ENCODE measurements at regions of chr15 and their contacts with region 1.

Region 1: DNA sequence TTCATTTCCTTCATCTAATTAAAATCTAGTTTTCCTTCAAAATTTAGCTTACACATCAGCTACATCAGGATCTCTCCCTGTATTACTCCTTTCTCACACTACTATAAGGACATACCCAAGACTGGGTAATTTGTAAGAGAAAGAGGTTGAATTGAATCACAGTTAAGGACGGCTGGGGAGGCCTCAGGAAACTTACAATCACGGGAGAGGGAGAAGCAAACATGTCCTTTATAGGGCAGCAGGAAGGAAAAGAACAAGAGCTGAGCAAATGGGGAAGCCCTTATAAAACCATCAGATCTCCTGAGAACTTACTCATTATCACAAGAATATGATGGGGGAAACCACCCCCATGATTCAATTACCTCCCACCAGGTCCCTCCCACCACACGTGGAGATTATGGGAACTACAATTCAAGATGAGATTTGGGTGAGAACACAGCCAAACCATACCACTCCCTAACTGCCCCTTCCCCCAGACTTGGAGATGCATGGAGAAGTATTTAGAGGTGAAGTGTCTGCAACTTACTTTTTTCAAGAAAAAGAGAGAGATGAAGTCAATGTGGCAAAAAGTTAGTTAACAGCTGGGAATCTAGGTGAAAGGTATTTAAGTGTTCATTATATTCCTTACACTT is 21.3 kb downstream of the PRTG start:
- DNase-seq: no peak
- ATAC-seq: no peak
- H3K4me3 ChIP-seq: no peak overlapping the region
- H3K27ac ChIP-seq: no peak overlapping the region
- H3K4me1 ChIP-seq: no peaks in the 10 kb centered on the region
- H3K27me3 ChIP-seq: no peaks in the 10 kb centered on the region
- CTCF ChIP-seq: no peak
- EP300 ChIP-seq: no peak
- POLR2A ChIP-seq: no peak
- RAD21 ChIP-seq: no peak

Region 2: DNA sequence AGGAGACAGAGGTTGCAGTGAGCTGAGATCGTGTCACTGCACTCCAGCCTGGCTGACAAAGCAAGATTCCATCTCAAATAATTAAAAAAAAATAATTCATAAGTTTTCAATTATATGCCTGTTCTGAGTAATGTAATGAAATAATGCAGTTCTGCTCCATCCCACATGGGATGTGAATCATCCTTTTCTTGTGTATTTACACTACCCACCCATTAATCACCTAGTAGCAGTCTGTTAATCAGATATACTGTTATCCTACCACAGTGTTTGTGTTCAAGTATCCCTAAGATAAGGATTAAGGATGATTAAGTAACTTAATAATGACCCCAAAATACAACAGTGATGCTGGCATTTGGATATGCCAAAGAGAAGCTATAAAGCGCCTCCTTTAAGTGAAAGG is 363.9 kb before region 1 on chr15:
- CTCF ChIA-PET with region 1: no interaction called
- POLR2A ChIA-PET with region 1: no interaction called
- RAD21 ChIA-PET with region 1: no interaction called
- SMC1A ChIA-PET with region 1: no interaction called
- in situ Hi-C with region 1: no loop called
- intact Hi-C with region 1: no loop called
- DNase-seq: no peak
- ATAC-seq: no peak
- H3K4me3 ChIP-seq: no peak overlapping the region
- H3K27ac ChIP-seq: no peak overlapping the region
- H3K4me1 ChIP-seq: no peaks in the 10 kb centered on the region
- H3K27me3 ChIP-seq: no peaks in the 10 kb centered on the region
- CTCF ChIP-seq: no peak
- EP300 ChIP-seq: no peak
- POLR2A ChIP-seq: no peak
- RAD21 ChIP-seq: no peak

Region 3: DNA sequence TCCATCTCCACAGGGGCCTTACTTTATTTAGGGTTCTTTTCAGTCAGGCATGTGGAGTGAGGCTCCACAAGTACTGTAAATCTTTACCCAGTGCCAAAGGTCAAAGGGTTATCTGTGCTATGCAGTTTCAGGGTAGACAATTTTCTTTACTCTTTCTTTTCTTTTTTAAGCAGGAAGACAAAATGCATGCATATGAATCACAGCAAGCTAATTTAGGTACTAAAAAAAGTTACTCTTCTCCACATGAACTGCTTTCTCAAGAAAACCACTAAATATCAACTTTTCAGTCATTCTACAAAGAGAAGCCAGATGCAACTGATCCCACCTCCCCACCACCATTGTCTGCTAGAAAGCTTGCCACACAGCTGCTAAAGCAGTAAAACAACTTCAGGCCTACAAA is 60.2 kb before region 1 on chr15:
- CTCF ChIA-PET with region 1: no interaction called
- POLR2A ChIA-PET with region 1: no interaction called
- RAD21 ChIA-PET with region 1: no interaction called
- SMC1A ChIA-PET with region 1: no interaction called
- in situ Hi-C with region 1: loop called (anchors 10 kb)
- intact Hi-C with region 1: no loop called
- DNase-seq: no peak
- ATAC-seq: no peak
- H3K4me3 ChIP-seq: no peak overlapping the region
- H3K27ac ChIP-seq: no peak overlapping the region
- H3K4me1 ChIP-seq: no peaks in the 10 kb centered on the region
- H3K27me3 ChIP-seq: no peaks in the 10 kb centered on the region
- CTCF ChIP-seq: no peak
- EP300 ChIP-seq: no peak
- POLR2A ChIP-seq: no peak
- RAD21 ChIP-seq: no peak